ENCODE measurements at regions of chr17 and their contacts with region 1.

Region 1: GRCh38 chr17:62008294-62008693 is 56.8 kb downstream of the MED13 start:
- H3K4me3 Mint-ChIP-seq: no peak overlapping the region
- H3K27ac Mint-ChIP-seq: no peak overlapping the region
- H3K4me1 Mint-ChIP-seq: peaks cover 8% of the 10 kb centered on the region
- H3K27me3 Mint-ChIP-seq: no peaks in the 10 kb centered on the region

Region 2: GRCh38 chr17:62030209-62030608 is 21.9 kb after region 1 on chr17:
- intact Hi-C with region 1: no loop called
- H3K4me3 Mint-ChIP-seq: no peak overlapping the region
- H3K27ac Mint-ChIP-seq: no peak overlapping the region
- H3K4me1 Mint-ChIP-seq: no peaks in the 10 kb centered on the region
- H3K27me3 Mint-ChIP-seq: no peaks in the 10 kb centered on the region

Region 3: DNA sequence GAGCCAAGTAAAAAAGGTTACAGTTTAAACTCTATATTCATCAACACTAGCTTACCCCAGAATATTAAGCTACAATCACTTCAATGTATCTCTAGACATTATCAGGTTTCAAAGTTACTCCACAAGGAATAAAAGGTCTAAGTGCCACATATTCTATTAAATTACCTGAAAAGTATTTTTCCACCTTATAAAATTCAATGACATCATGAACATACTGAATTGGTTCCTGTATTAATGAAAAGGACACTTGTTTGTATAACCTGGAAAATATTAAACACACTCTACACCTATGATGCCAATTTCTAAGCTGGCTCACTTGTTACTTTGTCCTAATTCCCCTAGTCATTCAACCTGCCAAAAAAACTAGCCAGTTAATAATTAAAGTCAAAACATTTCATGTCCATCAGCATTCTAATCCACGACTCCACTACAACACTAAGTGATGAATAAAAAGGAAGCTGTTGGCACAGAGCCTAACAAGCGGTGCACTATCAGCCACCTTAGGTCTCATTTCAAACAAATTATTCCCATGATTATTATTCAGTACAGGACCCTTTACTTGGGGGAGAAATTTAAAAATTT is 44.6 kb after region 1 on chr17:
- intact Hi-C with region 1: loop called (anchors 10 kb)
- H3K4me3 Mint-ChIP-seq: no peak overlapping the region
- H3K27ac Mint-ChIP-seq: no peak overlapping the region
- H3K4me1 Mint-ChIP-seq: peaks cover 8% of the 10 kb centered on the region
- H3K27me3 Mint-ChIP-seq: no peaks in the 10 kb centered on the region